ENCODE measurements at regions of chr2 and their contacts with region 1.

Region 1: GRCh38 chr2:25376750-25377621 is 35.3 kb upstream of the DNMT3A start:
- DNase-seq: peak; percentile 91
- ATAC-seq: peak; percentile 97
- H3K4me3 ChIP-seq: no peak overlapping the region
- H3K27ac ChIP-seq: peak overlapping the region; percentile 80
- H3K4me1 ChIP-seq: peaks cover 39% of the 10 kb centered on the region
- H3K27me3 ChIP-seq: no peaks in the 10 kb centered on the region
- CTCF ChIP-seq: peak; percentile 75 to 96 (median 92); a peak in 5 of 6 replicates
- EP300 ChIP-seq: peak; percentile 86 to 94
- POLR2A ChIP-seq: peak; percentile 58; the same call in 1 of the 2 replicates
- RAD21 ChIP-seq: peak; percentile 76

Region 2: DNA sequence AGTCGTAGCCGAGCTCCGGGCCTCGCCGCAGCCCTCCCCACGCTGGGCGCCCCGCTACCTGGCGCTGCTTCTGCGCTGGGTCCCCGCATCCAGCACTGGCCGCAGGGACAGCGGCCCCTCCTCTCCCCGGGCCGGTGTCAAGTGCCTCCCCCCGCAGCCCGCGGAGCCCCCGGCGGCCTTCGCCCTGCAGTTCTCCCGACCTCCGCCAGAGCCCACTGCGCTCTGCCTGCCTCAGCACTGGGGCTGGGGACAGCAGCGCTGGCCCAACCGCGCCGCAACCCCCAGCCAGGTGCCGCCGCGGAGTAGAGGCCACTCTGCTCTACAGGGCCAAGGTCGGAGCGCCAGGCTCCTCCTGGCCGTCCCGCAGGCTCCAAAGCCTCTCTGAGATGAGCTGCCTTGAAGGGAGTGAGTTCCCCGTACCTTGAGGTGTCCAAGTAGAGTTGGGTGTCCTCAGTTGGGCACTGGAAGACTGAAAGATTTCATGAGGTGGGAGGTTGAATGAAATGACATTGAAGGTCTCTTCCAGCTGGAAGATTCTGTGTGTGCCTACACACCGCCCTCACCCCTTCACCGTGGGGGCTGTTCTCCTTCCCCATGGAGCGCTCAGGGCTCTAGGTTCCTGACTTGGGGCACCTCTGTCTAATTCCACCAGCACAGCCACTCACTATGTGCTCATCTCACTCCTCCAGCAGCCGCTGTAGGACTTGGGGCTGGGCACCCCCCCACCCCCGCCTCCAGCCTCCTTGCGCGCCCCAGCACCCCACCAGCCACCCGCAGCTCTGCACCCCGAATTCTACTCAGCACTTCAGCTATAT is 34.4 kb before region 1 on chr2:
- CTCF ChIA-PET with region 1: interaction called, 9 read pairs
- POLR2A ChIA-PET with region 1: no interaction called
- RAD21 ChIA-PET with region 1: interaction called, 3 read pairs
- SMC1A ChIA-PET with region 1: interaction called, 5 read pairs
- in situ Hi-C with region 1: no loop called
- intact Hi-C with region 1: loop called (anchors 2 kb)
- DNase-seq: no peak
- ATAC-seq: peak; percentile 94
- H3K4me3 ChIP-seq: peak overlapping the region; percentile 76; the same call in 1 of the 2 replicates
- H3K27ac ChIP-seq: peak overlapping the region; percentile 52
- H3K4me1 ChIP-seq: peaks cover 12% of the 10 kb centered on the region
- H3K27me3 ChIP-seq: no peaks in the 10 kb centered on the region; a peak in 1 of 4 replicates
- CTCF ChIP-seq: peak; percentile 93 to 99 (median 97)
- EP300 ChIP-seq: no peak
- POLR2A ChIP-seq: peak; percentile 50; the same call in 1 of the 2 replicates
- RAD21 ChIP-seq: peak; percentile 90

Region 3: GRCh38 chr2:25402477-25402876 is 25.5 kb after region 1 on chr2:
- CTCF ChIA-PET with region 1: interaction called, 18 read pairs
- POLR2A ChIA-PET with region 1: interaction called, 18 read pairs
- RAD21 ChIA-PET with region 1: interaction called, 9 read pairs
- SMC1A ChIA-PET with region 1: interaction called, 92 read pairs
- in situ Hi-C with region 1: no loop called
- intact Hi-C with region 1: loop called (anchors 2 kb)
- DNase-seq: no peak
- ATAC-seq: peak; percentile 57
- H3K4me3 ChIP-seq: peak overlapping the region; percentile 35; the same call in 1 of the 2 replicates
- H3K27ac ChIP-seq: peak overlapping the region; percentile 97
- H3K4me1 ChIP-seq: peaks cover 58% of the 10 kb centered on the region
- H3K27me3 ChIP-seq: no peaks in the 10 kb centered on the region
- CTCF ChIP-seq: no peak
- EP300 ChIP-seq: peak in 1 of 2 experiments; percentile 74; a peak in 2 of 4 replicates
- POLR2A ChIP-seq: peak; percentile 32; the same call in 1 of the 2 replicates
- RAD21 ChIP-seq: no peak

Region 4: DNA sequence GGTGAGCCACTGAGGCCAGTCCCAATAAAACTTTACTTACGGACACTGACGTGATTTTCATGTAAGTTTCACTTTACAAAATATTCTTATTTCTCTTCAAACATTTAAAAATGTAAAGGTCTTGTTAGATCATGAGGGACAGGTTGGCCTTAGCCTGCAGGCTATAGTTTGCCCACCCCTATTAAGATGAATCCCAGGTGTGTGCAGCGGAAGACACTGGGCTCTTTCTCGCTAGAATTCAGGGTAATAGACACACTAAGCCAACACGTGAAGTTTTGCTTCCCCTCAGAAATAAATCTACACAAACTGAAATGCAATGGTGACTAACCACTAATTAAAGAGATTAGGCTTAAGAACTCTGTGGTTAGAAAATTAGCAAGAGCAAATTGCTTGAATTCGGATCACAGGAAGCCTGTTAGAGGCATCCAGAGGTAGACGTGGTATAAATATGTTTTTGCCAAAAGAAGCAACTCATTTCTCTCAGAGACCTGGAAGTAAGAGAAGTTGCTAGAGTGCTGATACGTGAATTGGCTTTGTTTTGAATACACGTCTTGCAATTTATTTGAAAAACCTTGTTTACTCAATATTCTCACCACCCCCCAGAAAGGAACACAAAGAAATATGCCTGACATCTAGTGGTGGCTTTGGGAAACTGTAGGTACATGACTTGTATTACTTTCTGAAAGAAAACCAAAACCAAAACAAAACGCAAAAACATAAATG is 144.8 kb after region 1 on chr2:
- CTCF ChIA-PET with region 1: interaction called, 5 read pairs
- POLR2A ChIA-PET with region 1: interaction called, 3 read pairs
- RAD21 ChIA-PET with region 1: no interaction called
- SMC1A ChIA-PET with region 1: interaction called, 5 read pairs
- in situ Hi-C with region 1: no loop called
- intact Hi-C with region 1: loop called (anchors 1 kb)
- DNase-seq: peak; percentile 90
- ATAC-seq: peak; percentile 94
- H3K4me3 ChIP-seq: no peak overlapping the region
- H3K27ac ChIP-seq: peak overlapping the region; percentile 67
- H3K4me1 ChIP-seq: peaks cover 6% of the 10 kb centered on the region; the same call in 1 of the 2 replicates
- H3K27me3 ChIP-seq: no peaks in the 10 kb centered on the region
- CTCF ChIP-seq: peak; percentile 75 to 86 (median 81)
- EP300 ChIP-seq: 0 out of 4 replicates have a peak, but pooled peaks of 1 of the 2 experiments have one; percentile 12
- POLR2A ChIP-seq: no peak
- RAD21 ChIP-seq: peak; percentile 99